ENCODE measurements at regions of chr2 and their contacts with region 1.

Region 1: GRCh38 chr2:17672583-17673317 is 80.9 kb downstream of the SMC6 start:
- DNase-seq: peak; percentile 47
- H3K4me3 Mint-ChIP-seq: no peak overlapping the region
- H3K27ac Mint-ChIP-seq: no peak overlapping the region
- H3K4me1 Mint-ChIP-seq: peaks cover 11% of the 10 kb centered on the region
- H3K27me3 Mint-ChIP-seq: no peaks in the 10 kb centered on the region
- CTCF ChIP-seq: no peak

Region 2: GRCh38 chr2:16773080-16773713 is 899.6 kb before region 1 on chr2:
- CTCF ChIA-PET with region 1: interaction called, 37 read pairs
- POLR2A ChIA-PET with region 1: no interaction called
- intact Hi-C with region 1: loop called (anchors 1 kb)
- DNase-seq: peak; percentile 74
- H3K4me3 Mint-ChIP-seq: no peak overlapping the region
- H3K27ac Mint-ChIP-seq: no peak overlapping the region
- H3K4me1 Mint-ChIP-seq: peaks cover 10% of the 10 kb centered on the region
- H3K27me3 Mint-ChIP-seq: peaks cover 21% of the 10 kb centered on the region
- CTCF ChIP-seq: peak; percentile 73

Region 3: GRCh38 chr2:17309741-17310339 is 362.9 kb before region 1 on chr2:
- CTCF ChIA-PET with region 1: interaction called, 50 read pairs
- POLR2A ChIA-PET with region 1: interaction called, 4 read pairs
- intact Hi-C with region 1: loop called (anchors 5 kb)
- DNase-seq: peak; percentile 83
- H3K4me3 Mint-ChIP-seq: no peak overlapping the region
- H3K27ac Mint-ChIP-seq: no peak overlapping the region
- H3K4me1 Mint-ChIP-seq: no peaks in the 10 kb centered on the region
- H3K27me3 Mint-ChIP-seq: no peaks in the 10 kb centered on the region
- CTCF ChIP-seq: peak; percentile 80

Region 4: DNA sequence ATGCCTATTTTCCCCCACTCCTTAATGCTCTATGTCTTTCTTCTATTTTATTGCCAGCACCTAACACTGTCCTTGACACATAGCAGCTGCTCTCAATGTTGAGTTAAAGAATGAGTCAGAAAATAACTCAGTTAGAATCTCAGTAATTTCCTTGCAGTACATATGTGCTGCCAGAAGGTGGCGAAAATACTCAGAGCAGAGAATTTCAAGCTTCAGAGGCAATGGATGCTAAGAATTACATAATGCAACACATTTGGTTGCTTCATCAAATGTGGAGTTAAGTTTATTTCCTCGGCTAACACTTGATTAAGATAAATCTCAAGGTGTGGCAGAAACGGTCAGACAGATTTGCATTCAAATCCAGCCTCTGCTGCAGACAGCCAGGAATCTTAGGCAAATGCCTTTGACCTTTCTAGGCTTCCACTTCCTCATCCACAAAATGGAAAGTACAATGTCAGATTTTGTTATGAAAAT is 26.6 kb before region 1 on chr2:
- CTCF ChIA-PET with region 1: interaction called, 24 read pairs
- POLR2A ChIA-PET with region 1: interaction called, 4 read pairs
- intact Hi-C with region 1: no loop called
- DNase-seq: peak; percentile 84
- H3K4me3 Mint-ChIP-seq: no peak overlapping the region
- H3K27ac Mint-ChIP-seq: no peak overlapping the region
- H3K4me1 Mint-ChIP-seq: peaks cover 31% of the 10 kb centered on the region
- H3K27me3 Mint-ChIP-seq: no peaks in the 10 kb centered on the region
- CTCF ChIP-seq: peak; percentile 73

Measured in MCF 10A (cell line).